ENCODE measurements at regions of chr2 and their contacts with region 1.

Region 1: GRCh38 chr2:170530284-170530745 is 184.8 kb upstream of the SP5 start:
- DNase-seq: peak in 1 of 2 experiments; percentile 29
- H3K4me3 ChIP-seq: no peak overlapping the region
- H3K27ac ChIP-seq: no peak overlapping the region
- H3K4me1 ChIP-seq: peaks cover 7% of the 10 kb centered on the region
- H3K27me3 ChIP-seq: no peaks in the 10 kb centered on the region
- CTCF ChIP-seq: no peak

Region 2: GRCh38 chr2:170409164-170409535 is 121.2 kb before region 1 on chr2:
- CTCF ChIA-PET with region 1: no interaction called
- POLR2A ChIA-PET with region 1: no interaction called
- intact Hi-C with region 1: loop called (anchors 5 kb)
- DNase-seq: peak in 1 of 2 experiments; percentile 47
- H3K4me3 ChIP-seq: no peak overlapping the region
- H3K27ac ChIP-seq: no peak overlapping the region
- H3K4me1 ChIP-seq: peaks cover 15% of the 10 kb centered on the region
- H3K27me3 ChIP-seq: no peaks in the 10 kb centered on the region
- CTCF ChIP-seq: peak; percentile 94

Region 3: DNA sequence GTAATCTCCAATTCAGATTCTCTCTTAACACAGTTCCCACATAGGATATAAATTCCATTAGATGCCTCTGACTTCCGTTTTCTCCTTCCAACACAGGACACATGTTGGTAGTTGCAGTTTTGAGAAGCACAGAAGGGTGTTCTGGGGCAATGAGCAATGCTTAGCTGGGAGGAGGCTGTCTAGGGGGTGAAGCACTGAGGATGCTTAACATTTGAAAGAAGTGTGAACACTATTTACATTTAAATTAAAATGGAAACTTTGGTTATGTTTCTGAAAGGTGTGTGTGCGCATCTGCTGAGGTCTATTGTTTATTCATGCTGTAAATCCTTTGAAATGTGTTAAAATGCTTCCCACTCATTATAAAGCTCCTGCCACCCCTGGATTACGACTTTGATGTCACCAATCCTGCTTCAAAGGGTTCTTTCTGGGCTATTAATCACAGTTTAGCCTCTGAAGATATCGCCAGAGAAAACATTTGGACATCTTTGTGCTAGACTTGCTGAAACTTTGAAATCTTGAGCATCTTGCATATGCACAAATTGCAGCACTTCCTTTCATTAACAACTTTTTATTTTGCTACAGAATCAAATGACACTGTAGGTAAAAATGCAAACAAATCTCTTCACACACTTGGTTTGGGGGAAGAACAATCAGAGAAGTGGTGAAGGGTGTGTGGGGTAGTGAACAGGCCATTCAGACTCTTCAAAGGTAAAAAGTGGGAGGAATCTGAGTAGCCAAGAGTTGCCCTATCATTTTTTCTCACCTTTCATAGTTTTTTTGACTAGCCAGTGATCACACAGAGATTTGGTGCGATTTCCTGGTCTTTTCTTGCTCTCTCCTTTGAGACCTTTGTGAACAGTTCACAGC is 94.0 kb before region 1 on chr2:
- CTCF ChIA-PET with region 1: no interaction called
- POLR2A ChIA-PET with region 1: no interaction called
- intact Hi-C with region 1: loop called (anchors 1 kb)
- DNase-seq: no peak
- H3K4me3 ChIP-seq: no peak overlapping the region
- H3K27ac ChIP-seq: no peak overlapping the region
- H3K4me1 ChIP-seq: peaks cover 5% of the 10 kb centered on the region
- H3K27me3 ChIP-seq: no peaks in the 10 kb centered on the region
- CTCF ChIP-seq: no peak

Region 4: GRCh38 chr2:170509452-170510193 is 20.7 kb before region 1 on chr2:
- CTCF ChIA-PET with region 1: interaction called, 13 read pairs
- POLR2A ChIA-PET with region 1: no interaction called
- intact Hi-C with region 1: no loop called
- DNase-seq: no peak
- H3K4me3 ChIP-seq: no peak overlapping the region
- H3K27ac ChIP-seq: no peak overlapping the region
- H3K4me1 ChIP-seq: no peaks in the 10 kb centered on the region
- H3K27me3 ChIP-seq: no peaks in the 10 kb centered on the region
- CTCF ChIP-seq: no peak

Region 5: GRCh38 chr2:172329774-172330671 is 1799.7 kb after region 1 on chr2:
- CTCF ChIA-PET with region 1: no interaction called
- POLR2A ChIA-PET with region 1: interaction called, 15 read pairs
- intact Hi-C with region 1: no loop called
- DNase-seq: no peak
- H3K4me3 ChIP-seq: no peak overlapping the region
- H3K27ac ChIP-seq: no peak overlapping the region
- H3K4me1 ChIP-seq: 0 out of 2 replicates have a peak, but pooled peaks cover 5% of the 10 kb centered on the region
- H3K27me3 ChIP-seq: no peaks in the 10 kb centered on the region
- CTCF ChIP-seq: no peak

Measured in PC-9 (cell line).